ENCODE measurements at regions of chr12 and their contacts with region 1.

Region 1: GRCh38 chr12:79344855-79345847 is 345.6 kb downstream of the PAWR start:
- DNase-seq: no peak
- ATAC-seq: peak in 2 of 4 donors; percentile 55 to 61
- H3K4me3 ChIP-seq: no peak overlapping the region
- H3K27ac ChIP-seq: no peak overlapping the region
- H3K4me1 ChIP-seq: no peaks in the 10 kb centered on the region
- H3K27me3 ChIP-seq: no peaks in the 10 kb centered on the region
- CTCF ChIP-seq: peak; percentile 21 to 64 (median 41)
- POLR2A ChIP-seq: no peak

Region 2: GRCh38 chr12:78392918-78393317 is 952.2 kb before region 1 on chr12:
- intact Hi-C with region 1: loop called in 1 of 10 experiments (anchors 10 kb)
- DNase-seq: no peak
- ATAC-seq: no peak
- H3K4me3 ChIP-seq: no peak overlapping the region
- H3K27ac ChIP-seq: no peak overlapping the region
- H3K4me1 ChIP-seq: no peaks in the 10 kb centered on the region
- H3K27me3 ChIP-seq: no peaks in the 10 kb centered on the region
- CTCF ChIP-seq: no peak
- POLR2A ChIP-seq: no peak

Region 3: GRCh38 chr12:79435742-79436141 is 90.6 kb after region 1 on chr12:
- intact Hi-C with region 1: no loop called
- DNase-seq: no peak
- ATAC-seq: no peak
- H3K4me3 ChIP-seq: no peak overlapping the region
- H3K27ac ChIP-seq: no peak overlapping the region
- H3K4me1 ChIP-seq: no peaks in the 10 kb centered on the region
- H3K27me3 ChIP-seq: no peaks in the 10 kb centered on the region
- CTCF ChIP-seq: no peak
- POLR2A ChIP-seq: no peak

Measured in heart left ventricle (tissue), 16 donors.